ENCODE measurements at regions of chr7 and their contacts with region 1.

Region 1: DNA sequence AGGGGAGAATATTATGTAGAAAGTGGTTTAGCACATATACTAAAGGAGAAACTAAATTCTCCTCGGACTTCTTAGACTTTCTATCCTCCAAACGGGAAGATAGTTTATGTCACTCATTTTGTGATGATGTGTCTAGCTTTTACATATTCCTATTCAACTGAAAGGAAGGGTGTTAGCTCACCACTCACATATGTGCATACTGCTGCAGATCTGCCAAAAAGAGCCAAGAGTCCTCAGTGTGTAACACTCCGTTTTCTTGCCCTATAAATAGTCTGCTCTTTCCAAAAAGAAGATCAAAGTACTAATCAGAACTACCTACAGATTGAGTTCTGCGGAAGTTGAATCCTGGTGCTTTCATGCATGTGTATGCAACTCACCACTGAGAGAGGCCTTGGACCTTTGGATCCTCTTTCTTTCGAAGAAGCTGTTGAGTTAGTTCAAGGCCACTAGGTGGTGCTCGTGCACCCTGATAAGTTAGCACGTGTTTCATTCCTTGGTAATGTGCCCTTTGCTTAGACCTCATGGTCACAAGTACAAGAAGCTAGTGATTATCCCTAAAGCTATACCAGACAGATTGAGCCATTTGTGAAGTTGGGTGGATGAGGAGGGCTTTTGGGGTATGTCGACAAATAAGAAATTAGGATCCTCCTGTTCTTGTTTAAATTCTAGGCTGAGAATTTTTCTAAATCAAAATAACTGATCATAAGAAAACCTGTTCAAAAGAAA is 14.1 kb downstream of the YAE1 start:
- DNase-seq: peak; percentile 67 to 74
- H3K4me3 ChIP-seq: no peak overlapping the region
- H3K27ac ChIP-seq: no peak overlapping the region
- H3K4me1 ChIP-seq: peaks cover 0 to 4% (median 2%) of the 10 kb centered on the region in 4 experiments; a peak in 4 of 7 replicates
- H3K27me3 ChIP-seq: no peaks in the 10 kb centered on the region
- CTCF ChIP-seq: peak; percentile 6 to 92 (median 91)
- EP300 ChIP-seq: no peak
- POLR2A ChIP-seq: no peak
- RAD21 ChIP-seq: peak; percentile 98 to 99

Region 2: DNA sequence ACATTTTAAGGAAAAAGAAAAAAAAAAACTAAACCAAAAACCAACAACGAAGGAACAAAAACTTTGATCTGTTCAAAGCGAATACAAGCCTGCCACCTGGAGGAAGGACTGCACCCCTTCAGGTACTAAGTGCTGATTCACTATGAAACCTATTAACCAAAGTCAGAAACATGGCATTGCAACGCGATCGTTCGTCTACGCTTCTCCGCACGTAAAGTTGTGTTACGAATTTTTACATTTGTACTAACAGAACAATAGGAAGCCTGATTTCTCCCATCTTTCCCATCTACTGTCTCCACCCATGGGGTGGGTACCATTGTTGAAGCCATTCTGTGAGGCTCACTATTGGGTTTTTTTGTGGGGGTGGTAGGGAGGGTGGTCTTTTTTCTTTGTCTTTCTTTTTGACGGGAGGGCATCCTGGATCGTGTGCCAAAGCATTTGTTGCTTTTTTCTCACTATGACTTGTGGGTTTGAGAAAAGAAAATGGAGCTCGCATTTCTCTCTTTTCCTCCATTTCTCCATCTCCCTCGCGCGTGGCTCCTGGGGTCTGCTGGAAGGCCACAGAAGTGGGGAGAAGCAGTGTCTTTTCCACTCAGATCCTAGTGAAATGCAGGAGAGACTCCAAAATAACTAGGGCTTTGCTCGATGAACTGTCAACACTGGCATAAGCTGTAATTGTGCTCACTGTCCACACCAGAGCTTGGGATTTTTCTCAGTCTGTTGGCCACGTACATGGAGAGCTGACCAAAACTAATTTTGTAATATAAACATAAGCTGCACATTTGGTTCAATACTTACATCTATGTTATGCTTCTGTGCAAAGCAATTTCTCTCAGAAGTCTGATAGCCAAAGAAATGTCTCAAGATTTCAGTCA is 115.0 kb before region 1 on chr7:
- CTCF ChIA-PET with region 1: no interaction called
- POLR2A ChIA-PET with region 1: no interaction called
- DNase-seq: peak; percentile 33 to 54
- H3K4me3 ChIP-seq: peak overlapping the region in 1 of 4 experiments; percentile 17; a peak in 1 of 8 replicates
- H3K27ac ChIP-seq: no peak overlapping the region
- H3K4me1 ChIP-seq: peaks cover 0 to 4% (median 2%) of the 10 kb centered on the region in 4 experiments; a peak in 6 of 7 replicates
- H3K27me3 ChIP-seq: no peaks in the 10 kb centered on the region
- CTCF ChIP-seq: peak; percentile 5 to 90 (median 68)
- EP300 ChIP-seq: no peak
- POLR2A ChIP-seq: no peak
- RAD21 ChIP-seq: peak; percentile 89 to 92

Region 3: GRCh38 chr7:39480901-39481300 is 99.4 kb before region 1 on chr7:
- CTCF ChIA-PET with region 1: no interaction called
- POLR2A ChIA-PET with region 1: no interaction called
- DNase-seq: no peak
- H3K4me3 ChIP-seq: no peak overlapping the region
- H3K27ac ChIP-seq: no peak overlapping the region
- H3K4me1 ChIP-seq: no peaks in the 10 kb centered on the region
- H3K27me3 ChIP-seq: no peaks in the 10 kb centered on the region
- CTCF ChIP-seq: no peak
- EP300 ChIP-seq: no peak
- POLR2A ChIP-seq: no peak
- RAD21 ChIP-seq: no peak

Region 4: GRCh38 chr7:39566023-39566921 is 14.0 kb before region 1 on chr7 and contains the start of gene YAE1:
- CTCF ChIA-PET with region 1: interaction called, 11 read pairs
- POLR2A ChIA-PET with region 1: interaction called, 17 read pairs
- DNase-seq: peak; percentile 38 to 83
- H3K4me3 ChIP-seq: peak within 1 kb of the TSS; percentile 73 to 98 (median 96)
- H3K27ac ChIP-seq: peak within 1 kb of the TSS; percentile 70; the same call in 1 of the 2 replicates
- H3K4me1 ChIP-seq: peaks cover 0 to 3% (median 1%) of the 10 kb centered on the region in 4 experiments; a peak in 2 of 7 replicates
- H3K27me3 ChIP-seq: peaks cover 0 to 2% (median 0%) of the 10 kb centered on the region in 4 experiments; a peak in 1 of 7 replicates
- CTCF ChIP-seq: no peak; a peak in 1 of 4 replicates
- EP300 ChIP-seq: no peak
- POLR2A ChIP-seq: peak; percentile 81 to 99
- RAD21 ChIP-seq: no peak
- total RNA-seq, gene YAE1: 30.0 and 38.0 TPM in 2 replicates

Region 5: GRCh38 chr7:39623018-39623731 is 42.9 kb after region 1 on chr7 and contains the start of gene RALA:
- CTCF ChIA-PET with region 1: interaction called, 44 read pairs
- POLR2A ChIA-PET with region 1: interaction called, 7 read pairs
- DNase-seq: peak; percentile 77 to 92
- H3K4me3 ChIP-seq: peak within 1 kb of the TSS; percentile 69 to 93 (median 78)
- H3K27ac ChIP-seq: peak within 1 kb of the TSS; percentile 98
- H3K4me1 ChIP-seq: peaks cover 2 to 8% (median 5%) of the 10 kb centered on the region in 4 experiments; a peak in 6 of 7 replicates
- H3K27me3 ChIP-seq: no peaks in the 10 kb centered on the region
- CTCF ChIP-seq: no peak
- EP300 ChIP-seq: no peak
- POLR2A ChIP-seq: peak; percentile 96 to 98
- RAD21 ChIP-seq: no peak
- total RNA-seq, gene RALA: 68.5 and 72.8 TPM in 2 replicates

Region 6: GRCh38 chr7:39727231-39728012 is 147.1 kb after region 1 on chr7:
- CTCF ChIA-PET with region 1: interaction called, 61 read pairs
- POLR2A ChIA-PET with region 1: no interaction called
- DNase-seq: no peak
- H3K4me3 ChIP-seq: no peak overlapping the region
- H3K27ac ChIP-seq: no peak overlapping the region
- H3K4me1 ChIP-seq: peaks cover 0 to 2% (median under 1%) of the 10 kb centered on the region in 4 experiments; a peak in 1 of 7 replicates
- H3K27me3 ChIP-seq: peaks cover 0 to 11% (median 4%) of the 10 kb centered on the region in 4 experiments; a peak in 3 of 7 replicates
- CTCF ChIP-seq: no peak
- EP300 ChIP-seq: no peak
- POLR2A ChIP-seq: no peak
- RAD21 ChIP-seq: no peak

Region 7: DNA sequence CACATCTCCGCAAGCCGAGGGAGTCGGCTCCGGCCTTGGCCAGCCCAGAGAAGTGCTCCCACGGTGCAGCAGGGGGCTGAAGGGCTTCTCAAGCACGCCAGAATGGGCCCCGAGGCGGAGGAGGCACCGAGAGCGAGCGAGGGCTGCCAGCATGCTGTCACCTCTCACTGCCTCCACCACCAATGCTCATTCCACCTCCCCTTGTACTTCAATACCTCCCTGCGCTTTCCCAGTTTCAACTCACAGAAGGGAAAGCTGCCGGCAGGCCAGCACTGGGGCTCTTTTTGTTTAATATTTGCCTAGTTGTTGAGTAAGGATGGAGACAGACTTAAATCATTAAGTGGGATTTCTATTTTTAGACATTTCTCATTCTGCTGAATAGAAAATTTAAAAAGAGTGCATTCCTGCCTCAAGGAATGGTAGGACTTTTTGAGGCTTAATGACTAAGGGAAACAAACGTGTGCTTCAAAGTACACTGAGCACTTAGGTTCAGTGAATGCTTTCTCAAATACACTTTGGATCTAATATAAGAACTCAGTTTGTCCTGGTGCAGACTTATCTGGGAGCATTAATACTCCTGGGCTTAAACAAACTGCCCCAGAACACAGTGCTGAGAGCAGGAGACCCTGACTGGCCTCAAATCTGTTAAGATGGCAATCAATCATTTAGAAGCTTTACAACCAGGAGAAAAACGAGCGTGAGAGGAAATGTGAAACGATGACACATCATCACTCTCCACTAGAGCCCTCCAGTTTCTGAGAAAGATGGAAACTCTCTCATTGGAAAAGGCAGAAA is 174.2 kb after region 1 on chr7:
- CTCF ChIA-PET with region 1: interaction called, 406 read pairs
- POLR2A ChIA-PET with region 1: no interaction called
- DNase-seq: no peak
- H3K4me3 ChIP-seq: no peak overlapping the region
- H3K27ac ChIP-seq: no peak overlapping the region
- H3K4me1 ChIP-seq: peaks cover 0 to 4% (median 1%) of the 10 kb centered on the region in 4 experiments; a peak in 3 of 7 replicates
- H3K27me3 ChIP-seq: no peaks in the 10 kb centered on the region
- CTCF ChIP-seq: no peak
- EP300 ChIP-seq: no peak
- POLR2A ChIP-seq: no peak
- RAD21 ChIP-seq: no peak